Activated CD8-positive, alpha-beta T cell treated with anti-CD3 and anti-CD28 coated beads for 36 hours (primary cell): ENCODE measurements at regions of chr2 and their contacts with region 1.

Region 1: DNA sequence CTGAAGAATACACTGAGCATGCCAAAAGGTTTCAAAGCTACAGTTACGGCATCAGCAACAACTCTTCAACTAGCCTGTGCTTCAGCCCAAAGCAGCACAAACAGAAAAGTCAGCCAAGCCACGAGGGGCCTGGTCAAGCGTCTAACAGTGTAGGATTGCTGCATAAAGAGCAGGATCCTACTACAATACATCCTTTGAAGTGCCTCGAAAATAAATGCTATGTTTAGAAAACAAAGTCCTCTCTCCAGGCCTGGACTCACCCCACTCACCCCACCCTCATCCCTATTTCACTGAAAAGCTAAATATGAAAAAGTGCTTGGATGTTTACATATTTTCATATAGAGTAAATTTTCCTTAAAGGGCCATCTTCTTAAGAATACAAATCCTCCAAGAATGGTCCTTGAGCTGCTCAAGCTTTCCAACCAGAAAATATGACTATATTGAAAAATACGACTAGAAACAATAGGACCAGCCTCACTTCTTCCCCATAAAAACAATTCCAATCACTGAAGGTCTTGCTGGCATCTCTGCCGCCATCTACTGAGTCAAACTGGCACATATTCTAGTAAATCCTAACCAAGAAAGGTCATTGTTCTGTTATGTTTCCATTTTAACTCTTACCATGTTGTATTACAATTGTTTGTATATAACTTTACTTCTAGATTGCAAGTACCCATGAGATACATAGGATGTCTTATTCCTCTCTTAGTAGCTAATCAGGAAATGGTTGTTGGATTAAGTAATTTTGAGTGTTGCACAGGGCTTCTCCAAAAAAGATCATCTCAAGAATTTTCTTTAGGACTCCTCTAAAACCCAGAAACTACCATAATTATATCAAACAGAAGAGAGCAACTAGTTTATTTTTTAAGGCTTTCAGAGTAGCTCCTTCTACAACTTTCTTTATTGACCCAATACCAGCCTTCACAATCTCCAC is 63.6 kb downstream of the CLHC1 start:
- DNase-seq: peak; percentile 59
- ATAC-seq: peak; percentile 71
- H3K4me3 Mint-ChIP-seq: no peak overlapping the region
- H3K27ac Mint-ChIP-seq: no peak overlapping the region
- H3K4me1 Mint-ChIP-seq: peaks cover 3% of the 10 kb centered on the region
- H3K27me3 Mint-ChIP-seq: no peaks in the 10 kb centered on the region
- CTCF ChIP-seq: peak; percentile 76

Region 2: GRCh38 chr2:54899576-54900200 is 268.8 kb before region 1 on chr2:
- CTCF ChIA-PET with region 1: interaction called, 27 read pairs
- POLR2A ChIA-PET with region 1: no interaction called
- intact Hi-C with region 1: loop called (anchors 10 kb)
- DNase-seq: no peak
- ATAC-seq: no peak
- H3K4me3 Mint-ChIP-seq: no peak overlapping the region
- H3K27ac Mint-ChIP-seq: no peak overlapping the region
- H3K4me1 Mint-ChIP-seq: peaks cover 17% of the 10 kb centered on the region
- H3K27me3 Mint-ChIP-seq: no peaks in the 10 kb centered on the region
- CTCF ChIP-seq: peak; percentile 48

Region 3: GRCh38 chr2:55010149-55010591 is 158.3 kb before region 1 on chr2:
- CTCF ChIA-PET with region 1: interaction called, 33 read pairs
- POLR2A ChIA-PET with region 1: no interaction called
- intact Hi-C with region 1: loop called (anchors 1 kb)
- DNase-seq: peak; percentile 46
- ATAC-seq: peak; percentile 95
- H3K4me3 Mint-ChIP-seq: peak overlapping the region; percentile 75
- H3K27ac Mint-ChIP-seq: peak overlapping the region; percentile 84
- H3K4me1 Mint-ChIP-seq: peaks cover 66% of the 10 kb centered on the region
- H3K27me3 Mint-ChIP-seq: no peaks in the 10 kb centered on the region
- CTCF ChIP-seq: no peak

Region 4: DNA sequence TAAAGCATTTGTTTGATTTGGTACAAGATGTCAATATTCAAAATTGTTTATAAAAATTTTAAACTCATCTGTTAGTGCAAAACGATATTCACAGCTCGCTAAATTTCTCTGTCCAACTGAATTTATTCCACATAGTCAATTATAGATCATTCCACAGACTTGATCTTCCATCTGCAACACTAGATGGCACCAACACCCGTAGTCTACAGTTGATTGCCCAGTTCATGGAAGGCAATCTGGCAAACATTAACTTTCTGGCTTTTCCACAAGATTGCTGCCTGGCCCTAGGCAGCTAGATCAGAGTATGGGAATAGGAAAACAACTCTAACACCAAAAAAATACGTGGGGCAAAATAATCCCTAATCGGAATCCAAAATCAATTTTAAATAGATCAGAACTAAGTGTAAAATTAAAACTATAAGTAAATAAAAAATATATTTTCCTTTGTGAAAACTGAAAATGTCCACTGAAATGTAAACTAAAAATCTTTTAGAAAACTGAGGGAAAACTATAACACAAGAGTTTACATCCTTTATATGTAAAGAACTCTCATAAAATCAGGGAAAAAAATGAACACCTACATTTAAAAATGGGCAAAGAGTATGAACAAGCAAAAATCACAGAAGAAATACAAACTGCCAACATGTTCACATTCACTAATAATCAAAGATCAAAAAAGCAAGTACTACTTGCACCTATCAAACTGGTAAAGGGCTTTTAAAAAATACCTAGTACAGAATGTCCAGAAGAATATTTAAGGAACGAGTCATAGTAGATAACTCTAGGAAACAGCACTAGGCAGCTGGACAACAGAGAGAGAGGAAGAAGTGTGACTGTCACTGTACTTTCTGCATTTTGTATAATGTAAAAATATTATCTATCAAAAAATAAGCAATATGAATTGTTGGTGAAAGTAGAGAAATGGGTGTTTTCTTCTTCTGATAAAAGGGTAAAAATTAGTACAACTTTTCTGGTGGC is 153.2 kb before region 1 on chr2:
- CTCF ChIA-PET with region 1: interaction called, 33 read pairs
- POLR2A ChIA-PET with region 1: no interaction called
- intact Hi-C with region 1: loop called (anchors 1 kb)
- DNase-seq: peak; percentile 44
- ATAC-seq: no peak
- H3K4me3 Mint-ChIP-seq: no peak overlapping the region
- H3K27ac Mint-ChIP-seq: no peak overlapping the region
- H3K4me1 Mint-ChIP-seq: peaks cover 36% of the 10 kb centered on the region
- H3K27me3 Mint-ChIP-seq: no peaks in the 10 kb centered on the region
- CTCF ChIP-seq: peak; percentile 72

Region 5: GRCh38 chr2:55026202-55026601 is 142.3 kb before region 1 on chr2:
- CTCF ChIA-PET with region 1: interaction called, 13 read pairs
- POLR2A ChIA-PET with region 1: no interaction called
- intact Hi-C with region 1: no loop called
- DNase-seq: no peak
- ATAC-seq: no peak
- H3K4me3 Mint-ChIP-seq: no peak overlapping the region
- H3K27ac Mint-ChIP-seq: no peak overlapping the region
- H3K4me1 Mint-ChIP-seq: peaks cover 14% of the 10 kb centered on the region
- H3K27me3 Mint-ChIP-seq: no peaks in the 10 kb centered on the region
- CTCF ChIP-seq: no peak

Region 6: GRCh38 chr2:55088400-55088799 is 80.1 kb before region 1 on chr2:
- CTCF ChIA-PET with region 1: no interaction called
- POLR2A ChIA-PET with region 1: no interaction called
- intact Hi-C with region 1: no loop called
- DNase-seq: no peak
- ATAC-seq: no peak
- H3K4me3 Mint-ChIP-seq: no peak overlapping the region
- H3K27ac Mint-ChIP-seq: no peak overlapping the region
- H3K4me1 Mint-ChIP-seq: peaks cover 5% of the 10 kb centered on the region
- H3K27me3 Mint-ChIP-seq: no peaks in the 10 kb centered on the region
- CTCF ChIP-seq: no peak

Region 7: DNA sequence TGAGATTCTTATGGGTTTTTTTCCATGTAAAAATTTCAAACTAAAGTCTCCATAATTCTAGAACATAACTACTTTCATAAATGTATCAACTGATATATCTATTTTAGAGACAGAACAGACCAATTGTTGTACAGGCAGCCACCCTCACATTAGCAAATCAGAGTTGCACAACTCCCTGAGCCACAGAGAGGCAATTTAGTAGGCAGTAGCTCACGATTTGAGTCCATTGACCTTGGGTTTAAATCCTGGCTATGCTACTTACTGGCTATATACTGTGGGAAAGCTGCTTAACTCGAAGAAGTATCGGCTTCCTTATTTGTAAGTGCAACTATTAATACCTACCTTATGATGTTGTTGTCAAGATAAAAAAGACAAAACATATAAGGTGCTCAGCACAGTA is 84.3 kb after region 1 on chr2:
- CTCF ChIA-PET with region 1: no interaction called
- POLR2A ChIA-PET with region 1: no interaction called
- intact Hi-C with region 1: no loop called
- DNase-seq: no peak
- ATAC-seq: no peak
- H3K4me3 Mint-ChIP-seq: no peak overlapping the region
- H3K27ac Mint-ChIP-seq: no peak overlapping the region
- H3K4me1 Mint-ChIP-seq: no peaks in the 10 kb centered on the region
- H3K27me3 Mint-ChIP-seq: no peaks in the 10 kb centered on the region
- CTCF ChIP-seq: no peak